Ascending aorta (tissue), 2 donors: ENCODE measurements at regions of chr4 and their contacts with region 1.

Region 1: DNA sequence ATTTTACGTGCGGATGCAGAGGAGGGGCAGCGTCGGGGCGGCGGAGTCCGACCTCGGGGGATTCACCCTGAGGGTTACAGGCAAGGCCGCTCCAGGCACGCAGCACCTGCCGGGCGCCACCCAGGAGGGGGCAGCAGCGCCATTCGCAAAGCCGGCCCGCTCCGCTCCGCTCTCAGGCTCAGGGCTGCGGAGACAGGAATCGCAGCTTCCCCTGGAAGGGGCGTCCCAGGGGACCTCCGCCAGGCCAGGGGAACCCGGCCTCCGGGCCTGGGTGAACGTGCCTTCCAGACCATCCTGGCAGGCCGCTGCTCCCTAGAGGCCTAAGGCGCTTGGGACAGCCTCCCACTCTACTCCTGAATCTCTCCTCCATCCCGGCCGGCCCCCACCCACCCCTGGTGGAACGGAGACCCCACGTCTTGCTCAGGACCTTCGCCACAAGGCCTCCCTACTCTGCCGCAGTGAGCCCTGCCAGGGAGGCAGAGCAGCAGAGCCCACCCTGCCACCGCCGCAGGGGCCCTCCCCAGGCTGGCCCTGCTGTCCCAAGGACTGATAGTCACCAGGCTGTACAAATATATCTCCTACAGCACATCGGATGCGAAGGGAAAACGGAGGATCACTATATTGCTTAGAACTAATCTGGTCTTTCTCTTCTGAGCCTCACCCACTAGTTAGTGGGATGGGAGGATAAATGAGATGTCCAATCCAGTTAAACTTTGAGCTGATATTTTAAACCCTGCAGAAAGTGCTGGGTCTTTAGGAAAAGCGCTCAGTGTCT is 115.0 kb downstream of the SMIM20 start:
- DNase-seq: peak in 1 of 2 donors; percentile 85
- H3K4me3 ChIP-seq: peak overlapping the region in 1 of 2 donors; percentile 51
- H3K27ac ChIP-seq: no peak overlapping the region
- H3K4me1 ChIP-seq: peaks cover 0 to 25% of the 10 kb centered on the region in 2 donors
- H3K27me3 ChIP-seq: no peaks in the 10 kb centered on the region
- CTCF ChIP-seq: peak; percentile 80 to 92 (median 85)

Region 2: DNA sequence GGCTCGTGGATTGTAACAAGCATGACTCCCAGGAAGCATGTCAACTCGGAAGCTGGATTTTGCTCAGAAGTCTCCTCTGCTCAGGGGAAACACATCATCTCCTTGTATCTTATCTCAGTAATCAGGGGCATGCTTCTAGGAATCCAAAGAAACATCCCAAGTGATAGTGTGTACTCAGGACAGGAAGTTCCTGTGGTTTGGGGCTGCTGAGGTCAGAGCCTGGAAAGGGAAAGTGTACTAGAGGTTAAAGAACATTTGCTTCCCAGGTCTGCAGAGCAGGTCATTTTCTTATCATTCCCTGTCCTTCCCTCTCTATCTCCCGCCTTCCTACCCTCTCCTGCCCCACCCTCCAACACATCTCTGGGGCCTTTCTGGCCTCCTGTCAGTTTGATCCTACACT is 334.5 kb before region 1 on chr4:
- intact Hi-C with region 1: no loop called
- DNase-seq: no peak
- H3K4me3 ChIP-seq: no peak overlapping the region
- H3K27ac ChIP-seq: no peak overlapping the region
- H3K4me1 ChIP-seq: no peaks in the 10 kb centered on the region
- H3K27me3 ChIP-seq: no peaks in the 10 kb centered on the region
- CTCF ChIP-seq: no peak

Region 3: GRCh38 chr4:25986807-25987206 is 42.2 kb before region 1 on chr4:
- intact Hi-C with region 1: loop called (anchors 5 kb)
- DNase-seq: peak in 1 of 2 donors; percentile 15
- H3K4me3 ChIP-seq: no peak overlapping the region
- H3K27ac ChIP-seq: no peak overlapping the region
- H3K4me1 ChIP-seq: peaks cover 0 to 9% of the 10 kb centered on the region in 2 donors
- H3K27me3 ChIP-seq: no peaks in the 10 kb centered on the region
- CTCF ChIP-seq: no peak

Region 4: DNA sequence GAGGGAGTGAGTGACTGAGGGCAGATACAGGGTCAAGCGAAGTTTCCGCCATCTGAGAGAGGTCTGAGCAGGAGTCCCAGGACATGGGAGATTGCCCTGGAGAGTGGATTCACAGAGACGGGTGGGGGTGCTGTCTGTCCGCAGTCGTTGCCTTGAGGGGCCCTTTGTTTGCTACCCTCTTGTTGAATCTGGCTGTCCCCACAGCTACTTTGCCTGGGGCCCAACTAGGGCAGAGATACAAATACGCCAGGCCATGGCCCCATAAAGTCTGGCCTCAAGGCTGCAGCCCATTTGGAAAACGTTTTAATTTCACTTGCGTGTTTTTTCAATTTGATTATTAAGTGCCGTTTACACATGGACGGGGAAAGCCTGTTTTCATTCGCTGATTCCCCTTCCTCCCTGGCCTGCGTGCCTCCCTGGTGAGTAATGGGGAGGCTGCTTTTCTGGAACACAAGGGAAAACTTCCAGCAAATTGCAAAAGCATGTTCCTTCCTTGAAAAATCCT is 19.4 kb after region 1 on chr4:
- intact Hi-C with region 1: loop called (anchors 1 kb)
- DNase-seq: peak in 1 of 2 donors; percentile 90
- H3K4me3 ChIP-seq: peak overlapping the region; percentile 12 to 35
- H3K27ac ChIP-seq: peak overlapping the region; percentile 87 to 93
- H3K4me1 ChIP-seq: peaks cover 10 to 22% of the 10 kb centered on the region in 2 donors
- H3K27me3 ChIP-seq: no peaks in the 10 kb centered on the region
- CTCF ChIP-seq: no peak

Region 5: GRCh38 chr4:26093551-26093950 is 64.6 kb after region 1 on chr4:
- intact Hi-C with region 1: loop called (anchors 5 kb)
- DNase-seq: peak in 1 of 2 donors; percentile 74
- H3K4me3 ChIP-seq: no peak overlapping the region
- H3K27ac ChIP-seq: peak overlapping the region; percentile 62 to 66
- H3K4me1 ChIP-seq: peaks cover 0 to 6% of the 10 kb centered on the region in 2 donors
- H3K27me3 ChIP-seq: no peaks in the 10 kb centered on the region
- CTCF ChIP-seq: no peak

Region 6: DNA sequence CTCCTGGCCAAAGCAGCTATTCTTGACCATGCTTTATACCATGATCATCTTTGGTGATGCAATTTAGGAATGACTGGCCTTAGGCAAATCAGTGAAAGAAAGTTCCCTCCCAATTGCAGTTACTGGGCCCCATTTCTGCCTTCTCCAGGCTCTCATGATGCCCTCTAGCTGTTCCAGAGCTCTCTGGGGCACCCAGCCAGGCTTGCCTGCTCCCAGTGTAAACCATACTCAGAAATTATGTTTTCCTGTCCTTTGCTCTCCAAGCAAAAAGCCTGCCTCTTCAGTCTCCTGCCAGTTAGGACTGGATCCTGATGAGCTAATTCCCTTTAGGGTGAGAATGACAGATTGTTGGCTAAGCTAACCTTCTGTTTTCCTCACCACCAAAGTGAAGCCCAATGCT is 206.5 kb after region 1 on chr4:
- intact Hi-C with region 1: loop called (anchors 5 kb)
- DNase-seq: peak in 1 of 2 donors; percentile 87
- H3K4me3 ChIP-seq: no peak overlapping the region
- H3K27ac ChIP-seq: peak overlapping the region; percentile 34 to 58
- H3K4me1 ChIP-seq: peaks cover 0 to 19% of the 10 kb centered on the region in 2 donors
- H3K27me3 ChIP-seq: no peaks in the 10 kb centered on the region
- CTCF ChIP-seq: peak in 1 of 3 experiments; percentile 22